Naive thymus-derived CD4-positive, alpha-beta T cell (primary cell): ENCODE measurements at regions of chr9 and their contacts with region 1.

Region 1: DNA sequence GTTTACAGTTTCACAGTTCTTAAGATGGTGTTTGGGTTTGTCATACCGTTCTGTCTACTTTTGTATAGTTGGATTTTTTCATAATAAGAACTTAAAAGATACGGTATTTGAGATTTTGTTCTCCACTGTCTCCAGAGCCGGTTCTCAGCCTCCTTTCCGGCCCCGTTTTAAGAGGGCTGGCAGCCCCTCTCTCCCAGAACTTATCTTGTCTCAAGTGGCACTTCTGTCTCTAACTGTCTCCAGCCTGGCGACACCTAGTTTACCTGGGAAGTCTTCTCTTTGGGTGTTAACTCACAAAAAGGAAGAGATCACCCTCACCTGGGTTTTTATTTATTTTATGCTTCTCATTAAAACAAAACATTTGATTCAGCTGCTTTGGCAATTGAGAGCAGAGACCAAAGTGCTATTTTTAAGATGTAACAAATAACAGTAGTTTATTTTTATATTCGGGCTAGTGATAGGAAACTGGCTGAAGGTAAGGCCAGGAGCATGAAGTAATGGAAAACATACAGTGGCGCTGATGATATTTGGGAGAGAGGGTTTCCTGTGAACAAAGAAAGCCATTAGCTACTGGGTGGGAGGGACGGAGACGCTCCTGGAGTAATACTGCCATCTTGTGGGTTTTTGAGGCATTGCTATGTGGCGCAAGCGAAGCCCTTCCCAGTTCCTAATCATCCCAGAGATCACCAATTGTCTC is 48.3 kb downstream of the ACER2 start:
- DNase-seq: peak; percentile 18 to 70 (median 57)
- ATAC-seq: peak; percentile 92
- H3K4me3 ChIP-seq: no peak overlapping the region
- H3K4me3 Mint-ChIP-seq: peak overlapping the region in 7 of 10 donors; percentile 9 to 68 (median 48)
- H3K27ac ChIP-seq: no peak overlapping the region
- H3K27ac Mint-ChIP-seq: peak overlapping the region in 1 of 9 donors; percentile 22
- H3K4me1 ChIP-seq: peaks cover 0 to 9% of the 10 kb centered on the region in 2 donors
- H3K4me1 Mint-ChIP-seq: peaks cover 7 to 12% (median 8%) of the 10 kb centered on the region in 7 donors
- H3K27me3 ChIP-seq: no peaks in the 10 kb centered on the region
- H3K27me3 Mint-ChIP-seq: peaks cover 0 to 8% (median 0%) of the 10 kb centered on the region in 5 donors

Region 2: DNA sequence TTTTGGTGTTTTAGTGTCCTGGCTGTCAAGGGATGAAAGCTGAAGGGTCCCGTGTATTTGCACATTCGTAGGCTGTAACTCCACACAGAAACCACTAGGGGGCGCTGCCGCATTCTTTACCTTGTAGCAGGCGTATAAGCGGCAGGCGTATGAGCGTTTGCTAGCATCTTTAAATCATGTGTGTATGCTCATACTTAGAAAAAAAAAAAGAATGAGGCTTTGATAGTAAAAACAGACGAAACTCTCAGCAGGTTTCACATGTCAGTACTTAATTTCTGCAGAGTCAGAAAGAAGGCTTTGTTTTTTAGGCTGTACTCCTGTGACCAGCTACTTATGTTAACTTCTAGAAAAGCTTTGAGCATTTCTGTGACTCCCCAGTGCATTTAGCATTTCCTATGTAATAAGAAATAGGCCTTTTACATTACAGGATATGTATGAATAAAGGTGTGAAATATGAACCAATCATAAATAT is 1202.0 kb before region 1 on chr9:
- CTCF ChIA-PET with region 1: interaction called, 6 read pairs
- POLR2A ChIA-PET with region 1: no interaction called
- intact Hi-C with region 1: loop called (anchors 1 kb)
- DNase-seq: peak; percentile 30 to 72 (median 57)
- ATAC-seq: peak; percentile 87
- H3K4me3 ChIP-seq: no peak overlapping the region
- H3K4me3 Mint-ChIP-seq: no peak overlapping the region
- H3K27ac ChIP-seq: no peak overlapping the region
- H3K27ac Mint-ChIP-seq: no peak overlapping the region
- H3K4me1 ChIP-seq: no peaks in the 10 kb centered on the region
- H3K4me1 Mint-ChIP-seq: peaks cover 0 to 6% (median 0%) of the 10 kb centered on the region in 7 donors
- H3K27me3 ChIP-seq: no peaks in the 10 kb centered on the region
- H3K27me3 Mint-ChIP-seq: peaks cover 11 to 16% (median 11%) of the 10 kb centered on the region in 5 donors

Region 3: DNA sequence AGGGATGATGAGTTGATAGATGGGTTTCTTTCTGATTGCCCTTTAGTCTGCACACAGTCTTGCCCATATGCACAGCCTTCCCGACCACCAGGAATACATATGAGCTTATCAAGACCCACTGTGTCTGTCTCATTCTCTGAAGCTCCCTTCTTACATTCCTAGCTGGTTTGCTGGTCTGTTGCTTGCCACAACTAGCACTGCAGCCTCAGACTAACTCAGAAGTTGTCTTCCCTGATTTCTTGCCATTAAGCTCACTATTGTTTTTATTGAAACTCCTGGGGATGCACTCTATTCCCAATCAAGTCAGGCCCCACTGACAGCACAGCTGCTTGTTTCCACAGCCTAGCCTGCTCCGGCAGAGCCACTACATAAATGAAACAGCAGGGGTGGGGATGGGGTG is 521.6 kb before region 1 on chr9:
- CTCF ChIA-PET with region 1: no interaction called
- POLR2A ChIA-PET with region 1: no interaction called
- intact Hi-C with region 1: no loop called
- DNase-seq: no peak
- ATAC-seq: no peak
- H3K4me3 ChIP-seq: no peak overlapping the region
- H3K4me3 Mint-ChIP-seq: no peak overlapping the region
- H3K27ac ChIP-seq: no peak overlapping the region
- H3K27ac Mint-ChIP-seq: no peak overlapping the region
- H3K4me1 ChIP-seq: no peaks in the 10 kb centered on the region
- H3K4me1 Mint-ChIP-seq: no peaks in the 10 kb centered on the region
- H3K27me3 ChIP-seq: no peaks in the 10 kb centered on the region
- H3K27me3 Mint-ChIP-seq: peaks cover 0 to 24% (median 12%) of the 10 kb centered on the region in 5 donors

Region 4: GRCh38 chr9:19048966-19049916 is 407.9 kb before region 1 on chr9 and contains the start of gene RRAGA:
- CTCF ChIA-PET with region 1: interaction called, 4 read pairs
- POLR2A ChIA-PET with region 1: interaction called, 3 read pairs
- intact Hi-C with region 1: loop called (anchors 1 to 2 kb)
- DNase-seq: peak; percentile 90 to 96 (median 95)
- ATAC-seq: peak; percentile 95
- H3K4me3 ChIP-seq: peak within 1 kb of the TSS; percentile 88
- H3K4me3 Mint-ChIP-seq: peak within 1 kb of the TSS; percentile 92 to 99 (median 95)
- H3K27ac ChIP-seq: peak within 1 kb of the TSS; percentile 85
- H3K27ac Mint-ChIP-seq: peak within 1 kb of the TSS; percentile 97 to 100 (median 98)
- H3K4me1 ChIP-seq: peaks cover 20% of the 10 kb centered on the region in 2 donors
- H3K4me1 Mint-ChIP-seq: peaks cover 6 to 50% (median 42%) of the 10 kb centered on the region in 7 donors
- H3K27me3 ChIP-seq: no peaks in the 10 kb centered on the region
- H3K27me3 Mint-ChIP-seq: peaks cover 0 to 2% (median 0%) of the 10 kb centered on the region in 5 donors
- total RNA-seq, gene RRAGA: 25.9 to 53.6 (median 51.9) TPM

Region 5: GRCh38 chr9:19127881-19128500 is 329.2 kb before region 1 on chr9:
- CTCF ChIA-PET with region 1: no interaction called
- POLR2A ChIA-PET with region 1: no interaction called
- intact Hi-C with region 1: loop called in 1 of 2 experiments (anchors 2 kb)
- DNase-seq: peak in 7 of 9 donors; percentile 12 to 44 (median 32)
- ATAC-seq: peak; percentile 44
- H3K4me3 ChIP-seq: peak overlapping the region; percentile 78
- H3K4me3 Mint-ChIP-seq: peak overlapping the region; percentile 80 to 96 (median 93)
- H3K27ac ChIP-seq: peak overlapping the region; percentile 94
- H3K27ac Mint-ChIP-seq: peak overlapping the region; percentile 60 to 97 (median 95)
- H3K4me1 ChIP-seq: peaks cover 24 to 26% of the 10 kb centered on the region in 2 donors
- H3K4me1 Mint-ChIP-seq: peaks cover 18 to 62% (median 48%) of the 10 kb centered on the region in 7 donors
- H3K27me3 ChIP-seq: no peaks in the 10 kb centered on the region
- H3K27me3 Mint-ChIP-seq: no peaks in the 10 kb centered on the region

Region 6: GRCh38 chr9:19306568-19306967 is 150.6 kb before region 1 on chr9:
- CTCF ChIA-PET with region 1: no interaction called
- POLR2A ChIA-PET with region 1: no interaction called
- intact Hi-C with region 1: loop called in 1 of 2 experiments (anchors 5 kb)
- DNase-seq: no peak
- ATAC-seq: no peak
- H3K4me3 ChIP-seq: no peak overlapping the region
- H3K4me3 Mint-ChIP-seq: no peak overlapping the region
- H3K27ac ChIP-seq: no peak overlapping the region
- H3K27ac Mint-ChIP-seq: no peak overlapping the region
- H3K4me1 ChIP-seq: no peaks in the 10 kb centered on the region
- H3K4me1 Mint-ChIP-seq: peaks cover 0 to 10% (median 0%) of the 10 kb centered on the region in 7 donors
- H3K27me3 ChIP-seq: no peaks in the 10 kb centered on the region
- H3K27me3 Mint-ChIP-seq: no peaks in the 10 kb centered on the region

Region 7: GRCh38 chr9:19379697-19380046 is 77.5 kb before region 1 on chr9:
- CTCF ChIA-PET with region 1: interaction called, 3 read pairs
- POLR2A ChIA-PET with region 1: interaction called, 7 read pairs
- intact Hi-C with region 1: loop called (anchors 1 kb)
- DNase-seq: peak in 1 of 9 donors; percentile 39
- ATAC-seq: peak; percentile 59
- H3K4me3 ChIP-seq: peak overlapping the region; percentile 89
- H3K4me3 Mint-ChIP-seq: peak overlapping the region; percentile 92 to 99 (median 98)
- H3K27ac ChIP-seq: peak overlapping the region; percentile 84
- H3K27ac Mint-ChIP-seq: peak overlapping the region; percentile 97 to 100 (median 99)
- H3K4me1 ChIP-seq: peaks cover 13 to 24% of the 10 kb centered on the region in 2 donors
- H3K4me1 Mint-ChIP-seq: peaks cover 29 to 50% (median 41%) of the 10 kb centered on the region in 7 donors
- H3K27me3 ChIP-seq: no peaks in the 10 kb centered on the region
- H3K27me3 Mint-ChIP-seq: no peaks in the 10 kb centered on the region